Caco-2 (cell line): ENCODE measurements at regions of chr7 and their contacts with region 1.

Region 1: DNA sequence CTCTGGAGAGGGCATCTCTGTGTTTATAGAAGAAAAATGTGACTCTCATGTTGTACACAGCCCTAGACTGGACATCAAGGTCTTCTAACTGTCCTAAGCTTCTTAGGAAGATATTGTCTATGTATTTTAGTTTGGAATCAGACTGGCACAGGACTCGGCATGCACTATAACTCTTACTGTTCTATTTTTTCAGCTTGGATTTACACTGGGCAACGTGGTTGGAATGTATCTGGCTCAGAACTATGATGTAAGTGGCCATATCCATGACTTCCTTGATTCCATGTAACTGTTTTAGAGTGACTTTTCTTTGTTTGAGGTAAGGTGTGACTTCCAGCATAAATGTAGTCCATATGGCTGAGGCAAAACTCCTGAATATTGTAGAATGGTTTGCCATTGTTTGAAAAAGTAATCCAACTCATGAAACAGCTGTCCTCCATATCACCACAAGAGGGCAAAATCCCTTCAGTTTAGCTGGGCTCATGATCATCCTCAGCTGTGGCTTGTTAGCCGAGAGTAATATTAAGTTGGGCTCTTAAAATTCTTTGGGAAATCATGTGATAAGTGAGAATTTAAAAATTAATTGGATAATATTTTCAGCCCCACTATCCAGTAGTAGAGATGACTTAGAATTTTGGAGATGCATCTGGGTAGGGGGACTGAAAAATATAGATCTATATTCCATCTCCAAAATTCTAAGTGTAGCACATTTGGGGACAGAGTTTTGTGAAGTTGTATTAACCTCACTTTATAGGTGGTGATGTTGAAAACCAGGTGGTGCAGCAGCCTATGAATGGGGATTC is 10.4 kb downstream of the STMP1 start:
- DNase-seq: peak in 1 of 2 experiments; percentile 41
- H3K4me3 ChIP-seq: no peak overlapping the region
- H3K4me3 Mint-ChIP-seq: no peak overlapping the region
- H3K27ac Mint-ChIP-seq: no peak overlapping the region
- H3K4me1 ChIP-seq: no peaks in the 10 kb centered on the region
- H3K4me1 Mint-ChIP-seq: no peaks in the 10 kb centered on the region
- H3K27me3 ChIP-seq: no peaks in the 10 kb centered on the region
- H3K27me3 Mint-ChIP-seq: no peaks in the 10 kb centered on the region
- CTCF ChIP-seq: peak; percentile 74 to 84

Region 2: GRCh38 chr7:135486261-135486920 is 186.4 kb before region 1 on chr7:
- CTCF ChIA-PET with region 1: no interaction called
- POLR2A ChIA-PET with region 1: no interaction called
- intact Hi-C with region 1: no loop called
- DNase-seq: no peak
- H3K4me3 ChIP-seq: no peak overlapping the region
- H3K4me3 Mint-ChIP-seq: no peak overlapping the region
- H3K27ac Mint-ChIP-seq: no peak overlapping the region
- H3K4me1 ChIP-seq: no peaks in the 10 kb centered on the region
- H3K4me1 Mint-ChIP-seq: no peaks in the 10 kb centered on the region
- H3K27me3 ChIP-seq: no peaks in the 10 kb centered on the region
- H3K27me3 Mint-ChIP-seq: no peaks in the 10 kb centered on the region
- CTCF ChIP-seq: no peak

Region 3: DNA sequence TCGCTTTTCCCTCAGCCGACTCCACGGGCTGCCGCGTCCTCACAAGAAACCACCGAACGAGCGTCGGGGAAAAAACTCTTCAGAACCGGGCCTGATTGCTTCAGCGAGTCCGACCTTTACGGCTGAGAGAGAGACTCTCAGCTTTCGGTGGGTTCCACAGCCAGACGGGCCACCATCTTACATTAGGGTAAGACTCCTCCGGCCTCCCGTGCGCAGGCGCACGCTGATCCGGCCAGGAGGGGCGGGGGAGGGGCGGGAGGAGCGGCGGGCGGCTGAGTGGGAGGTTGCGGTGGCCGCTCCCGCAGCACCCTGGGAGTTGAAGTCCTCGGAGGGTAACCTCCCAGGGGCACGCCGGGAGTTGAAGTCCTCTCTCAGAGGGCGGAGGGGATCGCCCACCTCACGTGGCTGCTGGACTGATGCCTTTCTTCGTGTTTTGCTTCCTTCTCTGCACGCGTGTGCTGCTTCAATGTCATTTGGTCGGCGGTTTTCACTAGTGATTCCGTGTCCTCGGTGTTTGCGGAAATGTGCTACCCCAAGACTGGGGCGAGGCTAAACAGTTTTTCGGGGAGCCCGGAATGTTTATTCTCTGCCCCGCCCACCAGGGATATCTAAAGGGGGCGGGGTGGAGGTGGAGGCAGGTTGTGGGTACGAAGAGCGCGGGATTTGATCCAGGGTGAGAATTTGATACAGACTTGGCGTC is 162.7 kb before region 1 on chr7 and contains the start of gene CNOT4:
- CTCF ChIA-PET with region 1: no interaction called
- POLR2A ChIA-PET with region 1: no interaction called
- intact Hi-C with region 1: no loop called
- DNase-seq: peak; percentile 95 to 97
- H3K4me3 ChIP-seq: peak within 1 kb of the TSS; percentile 82
- H3K4me3 Mint-ChIP-seq: no peak within 1 kb of the TSS
- H3K27ac Mint-ChIP-seq: no peak within 1 kb of the TSS
- H3K4me1 ChIP-seq: peaks cover 8% of the 10 kb centered on the region
- H3K4me1 Mint-ChIP-seq: no peaks in the 10 kb centered on the region
- H3K27me3 ChIP-seq: no peaks in the 10 kb centered on the region
- H3K27me3 Mint-ChIP-seq: no peaks in the 10 kb centered on the region
- CTCF ChIP-seq: no peak
- total RNA-seq, gene CNOT4: 22.0 and 22.6 TPM in 2 replicates

Region 4: DNA sequence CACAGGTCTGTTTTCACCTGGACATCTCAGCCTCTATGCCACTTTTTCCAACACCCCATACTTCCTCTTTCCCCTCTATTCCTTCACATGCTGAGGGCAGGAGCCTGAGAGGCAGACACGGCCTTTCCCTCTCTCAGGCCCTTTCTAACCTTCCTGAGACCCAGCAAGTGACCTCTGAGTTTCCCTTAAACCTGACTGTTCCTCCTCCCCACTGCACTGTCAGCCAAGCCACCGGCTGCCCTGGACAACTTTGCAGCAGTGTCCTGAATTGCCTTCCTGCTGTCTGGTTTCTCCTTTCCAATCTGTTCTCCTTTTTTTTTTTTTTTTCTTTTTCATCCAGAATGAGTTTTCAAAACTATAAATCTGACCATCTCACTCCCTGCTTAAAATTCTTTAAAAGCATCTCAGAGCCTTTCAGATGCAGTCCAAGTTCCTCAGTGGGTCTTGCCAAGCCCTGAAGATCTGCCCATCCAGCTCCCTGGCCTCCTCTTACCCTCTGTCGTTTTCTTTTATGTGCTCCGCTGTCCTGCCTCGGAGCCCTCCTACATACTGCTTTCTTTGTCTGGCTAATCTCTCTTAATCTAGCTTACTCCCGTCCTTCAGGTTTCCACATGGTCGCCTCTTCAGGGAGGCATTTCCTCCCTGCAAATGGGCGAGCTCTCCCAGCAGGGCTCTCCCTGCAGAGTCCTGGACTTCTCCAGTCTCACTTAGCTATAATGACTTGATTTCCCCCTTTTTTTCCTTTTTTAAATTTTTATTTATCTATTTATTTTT is 24.7 kb after region 1 on chr7:
- CTCF ChIA-PET with region 1: no interaction called
- POLR2A ChIA-PET with region 1: no interaction called
- intact Hi-C with region 1: no loop called
- DNase-seq: no peak
- H3K4me3 ChIP-seq: no peak overlapping the region
- H3K4me3 Mint-ChIP-seq: no peak overlapping the region
- H3K27ac Mint-ChIP-seq: peak overlapping the region; percentile 13
- H3K4me1 ChIP-seq: no peaks in the 10 kb centered on the region
- H3K4me1 Mint-ChIP-seq: peaks cover 6% of the 10 kb centered on the region
- H3K27me3 ChIP-seq: no peaks in the 10 kb centered on the region
- H3K27me3 Mint-ChIP-seq: no peaks in the 10 kb centered on the region
- CTCF ChIP-seq: no peak

Region 5: DNA sequence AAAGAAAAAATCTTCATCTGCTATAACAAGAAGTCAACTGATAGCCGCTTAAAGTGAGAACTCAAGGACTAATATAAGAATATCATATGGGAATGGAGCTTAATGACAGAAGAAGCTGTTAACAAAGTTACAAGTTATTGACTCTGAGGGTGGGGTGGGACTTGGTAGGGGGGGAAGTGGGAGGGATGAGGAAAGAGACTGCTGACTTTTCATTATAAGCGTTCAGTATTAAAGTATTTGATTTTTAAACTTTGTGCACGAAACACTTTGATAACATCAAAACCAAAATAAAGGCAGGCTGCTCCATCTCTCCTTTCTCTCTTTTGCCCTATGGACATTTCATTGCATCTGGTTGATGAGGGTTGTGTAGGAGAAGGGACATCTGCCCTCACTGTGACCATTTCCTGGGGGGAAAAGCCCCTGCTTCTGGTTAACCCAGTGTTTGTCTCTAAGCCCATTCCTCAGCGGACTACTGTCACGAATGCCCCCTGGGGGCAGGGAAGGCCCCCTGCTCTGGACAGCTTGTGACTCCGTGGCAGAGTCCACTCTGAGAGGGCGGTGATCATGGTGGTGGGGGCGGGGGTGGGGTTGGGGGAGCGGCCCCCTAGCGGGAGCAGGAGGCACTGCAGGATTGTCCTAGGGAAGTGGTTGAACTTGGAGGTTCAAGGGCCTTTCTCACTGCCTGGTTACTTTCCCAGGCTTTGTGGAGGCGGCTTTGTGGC is 37.8 kb after region 1 on chr7:
- CTCF ChIA-PET with region 1: interaction called, 3 read pairs
- POLR2A ChIA-PET with region 1: no interaction called
- intact Hi-C with region 1: loop called (anchors 1 kb)
- DNase-seq: peak in 1 of 2 experiments; percentile 37
- H3K4me3 ChIP-seq: no peak overlapping the region
- H3K4me3 Mint-ChIP-seq: no peak overlapping the region
- H3K27ac Mint-ChIP-seq: no peak overlapping the region
- H3K4me1 ChIP-seq: peaks cover 25% of the 10 kb centered on the region
- H3K4me1 Mint-ChIP-seq: no peaks in the 10 kb centered on the region
- H3K27me3 ChIP-seq: no peaks in the 10 kb centered on the region
- H3K27me3 Mint-ChIP-seq: no peaks in the 10 kb centered on the region
- CTCF ChIP-seq: peak; percentile 63 to 93

Region 6: GRCh38 chr7:135745703-135746312 is 73.0 kb after region 1 on chr7:
- CTCF ChIA-PET with region 1: no interaction called
- POLR2A ChIA-PET with region 1: no interaction called
- intact Hi-C with region 1: loop called (anchors 2 kb)
- DNase-seq: no peak
- H3K4me3 ChIP-seq: no peak overlapping the region
- H3K4me3 Mint-ChIP-seq: no peak overlapping the region
- H3K27ac Mint-ChIP-seq: no peak overlapping the region
- H3K4me1 ChIP-seq: peaks cover 3% of the 10 kb centered on the region; the same call in 1 of the 2 replicates
- H3K4me1 Mint-ChIP-seq: no peaks in the 10 kb centered on the region
- H3K27me3 ChIP-seq: no peaks in the 10 kb centered on the region
- H3K27me3 Mint-ChIP-seq: no peaks in the 10 kb centered on the region
- CTCF ChIP-seq: no peak

Region 7: DNA sequence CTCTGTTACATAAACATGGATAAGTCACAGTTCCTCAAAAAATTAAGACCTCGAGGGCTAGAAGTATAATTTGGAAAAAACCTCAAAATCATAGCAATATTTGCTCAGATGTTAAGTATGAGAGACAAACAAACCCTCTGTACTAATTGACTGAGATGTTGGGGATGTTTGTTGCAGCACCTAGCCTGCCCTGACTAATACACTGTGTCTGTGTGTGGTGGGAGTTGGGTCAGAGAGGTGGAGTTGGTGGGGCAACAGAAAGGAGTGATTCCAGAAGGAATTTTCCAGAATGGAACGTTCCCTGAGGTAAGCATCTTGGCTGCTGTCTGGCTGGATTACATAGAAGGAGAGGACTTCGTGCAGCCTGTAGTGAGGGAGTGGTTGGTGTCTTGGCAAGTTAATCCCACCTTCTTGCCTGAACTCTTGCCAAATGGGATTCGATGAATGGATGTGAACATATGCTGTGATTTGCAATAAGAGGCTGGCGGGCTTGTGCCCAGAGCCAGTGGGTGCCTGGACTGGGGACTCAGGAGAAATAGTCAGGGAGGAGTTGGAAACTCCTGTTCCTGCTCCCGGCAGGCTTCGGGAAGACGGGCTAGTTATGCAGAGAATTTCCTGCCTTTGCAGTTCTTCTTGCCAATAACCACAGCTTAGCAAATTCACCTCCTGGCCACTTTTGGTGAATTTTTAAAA is 85.1 kb after region 1 on chr7:
- CTCF ChIA-PET with region 1: no interaction called
- POLR2A ChIA-PET with region 1: no interaction called
- intact Hi-C with region 1: no loop called
- DNase-seq: no peak
- H3K4me3 ChIP-seq: no peak overlapping the region
- H3K4me3 Mint-ChIP-seq: no peak overlapping the region
- H3K27ac Mint-ChIP-seq: no peak overlapping the region
- H3K4me1 ChIP-seq: peaks cover 25% of the 10 kb centered on the region
- H3K4me1 Mint-ChIP-seq: peaks cover 11% of the 10 kb centered on the region
- H3K27me3 ChIP-seq: no peaks in the 10 kb centered on the region
- H3K27me3 Mint-ChIP-seq: no peaks in the 10 kb centered on the region
- CTCF ChIP-seq: no peak

Region 8: GRCh38 chr7:135795846-135796570 is 123.2 kb after region 1 on chr7:
- CTCF ChIA-PET with region 1: interaction called, 9 read pairs
- POLR2A ChIA-PET with region 1: no interaction called
- intact Hi-C with region 1: loop called (anchors 2 kb)
- DNase-seq: no peak
- H3K4me3 ChIP-seq: no peak overlapping the region
- H3K4me3 Mint-ChIP-seq: no peak overlapping the region
- H3K27ac Mint-ChIP-seq: no peak overlapping the region
- H3K4me1 ChIP-seq: no peaks in the 10 kb centered on the region
- H3K4me1 Mint-ChIP-seq: no peaks in the 10 kb centered on the region
- H3K27me3 ChIP-seq: no peaks in the 10 kb centered on the region
- H3K27me3 Mint-ChIP-seq: no peaks in the 10 kb centered on the region
- CTCF ChIP-seq: no peak

Region 9: DNA sequence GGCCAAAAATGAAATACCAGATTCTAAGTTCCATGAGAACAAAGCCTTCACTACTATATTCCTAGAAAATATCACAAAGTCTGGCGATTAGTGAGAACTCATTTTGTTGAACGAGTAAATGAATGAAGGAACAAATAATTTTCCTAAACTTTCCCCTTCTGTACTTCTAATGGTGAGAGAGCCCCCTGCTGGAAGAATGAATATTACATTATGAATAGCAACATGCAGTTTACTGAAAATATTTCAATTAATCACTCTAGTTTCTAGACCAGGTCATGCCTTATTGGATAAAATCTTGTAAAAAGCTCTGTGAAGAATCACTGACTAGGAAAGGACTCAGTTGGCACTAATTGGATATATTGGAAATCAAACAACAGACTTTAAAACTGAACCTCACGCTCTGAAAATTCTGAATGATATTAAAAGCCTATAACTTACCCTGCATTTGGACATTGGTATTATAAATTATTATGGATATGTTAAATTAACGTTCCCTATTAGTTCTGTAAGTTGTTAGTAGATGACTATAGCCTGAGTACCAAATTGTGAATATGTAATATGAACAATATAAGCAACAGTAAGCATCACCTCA is 336.8 kb after region 1 on chr7:
- CTCF ChIA-PET with region 1: no interaction called
- POLR2A ChIA-PET with region 1: no interaction called
- intact Hi-C with region 1: loop called (anchors 1 kb)
- DNase-seq: peak in 1 of 2 experiments; percentile 60
- H3K4me3 ChIP-seq: no peak overlapping the region
- H3K4me3 Mint-ChIP-seq: no peak overlapping the region
- H3K27ac Mint-ChIP-seq: no peak overlapping the region
- H3K4me1 ChIP-seq: no peaks in the 10 kb centered on the region
- H3K4me1 Mint-ChIP-seq: no peaks in the 10 kb centered on the region
- H3K27me3 ChIP-seq: no peaks in the 10 kb centered on the region; the same call in 1 of the 2 replicates
- H3K27me3 Mint-ChIP-seq: peaks cover 5% of the 10 kb centered on the region
- CTCF ChIP-seq: peak; percentile 46 to 85